Activated T-helper 1 cell treated with anti-CD3 and anti-CD28 coated beads, Interleukin-12 subunit alpha, Interleukin-12 subunit beta, Interleukin-2, Interleukin-4 antibody, amounts not matched to agents 30 ng/mL and 10 ng/mL and 1 ng/mL, durations not matched to agents 14 hours and 24 hours and 36 hours (primary cell): ENCODE measurements at regions of chr20 and their contacts with region 1.

Region 1: GRCh38 chr20:31822421-31823330 is 3.5 kb downstream of the MYLK2 start:
- DNase-seq: peak; percentile 58
- H3K4me3 Mint-ChIP-seq: no peak overlapping the region
- H3K27ac Mint-ChIP-seq: no peak overlapping the region
- H3K4me1 Mint-ChIP-seq: no peaks in the 10 kb centered on the region
- H3K27me3 Mint-ChIP-seq: peaks cover 1% of the 10 kb centered on the region

Region 2: DNA sequence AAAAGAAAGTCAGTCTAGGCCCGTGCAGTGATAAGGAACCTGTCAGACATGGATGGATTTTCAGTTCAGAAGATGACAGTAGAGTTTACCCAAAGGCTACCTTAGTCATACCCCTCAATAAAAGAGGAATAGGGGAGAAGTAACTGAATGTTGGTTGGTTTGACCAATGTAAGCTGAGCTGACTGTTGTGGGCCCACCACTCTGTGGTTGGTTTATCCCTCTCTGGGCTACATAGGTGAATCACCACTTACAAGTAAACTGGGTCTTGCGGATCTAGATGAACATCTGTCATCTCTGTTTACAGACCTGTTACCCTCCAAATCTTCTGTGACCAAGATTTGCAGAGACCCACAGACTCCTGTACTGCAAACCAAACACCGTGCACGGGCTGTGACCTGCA is 40.7 kb before region 1 on chr20:
- intact Hi-C with region 1: no loop called
- DNase-seq: no peak
- H3K4me3 Mint-ChIP-seq: no peak overlapping the region
- H3K27ac Mint-ChIP-seq: no peak overlapping the region
- H3K4me1 Mint-ChIP-seq: no peaks in the 10 kb centered on the region
- H3K27me3 Mint-ChIP-seq: no peaks in the 10 kb centered on the region

Region 3: GRCh38 chr20:32031007-32031958 is 208.6 kb after region 1 on chr20:
- intact Hi-C with region 1: loop called (anchors 1 kb)
- DNase-seq: peak; percentile 22
- H3K4me3 Mint-ChIP-seq: no peak overlapping the region
- H3K27ac Mint-ChIP-seq: no peak overlapping the region
- H3K4me1 Mint-ChIP-seq: no peaks in the 10 kb centered on the region
- H3K27me3 Mint-ChIP-seq: peaks cover 48% of the 10 kb centered on the region